Motor neuron (in vitro differentiated cells): ENCODE measurements at regions of chr1 and their contacts with region 1.

Region 1: GRCh38 chr1:153510984-153511410 is 24.8 kb downstream of the S100A6 start:
- ATAC-seq: peak; percentile 31 to 99 (median 96)
- H3K4me3 ChIP-seq: no peak overlapping the region
- H3K27ac ChIP-seq: no peak overlapping the region
- H3K4me1 ChIP-seq: no peaks in the 10 kb centered on the region

Region 2: DNA sequence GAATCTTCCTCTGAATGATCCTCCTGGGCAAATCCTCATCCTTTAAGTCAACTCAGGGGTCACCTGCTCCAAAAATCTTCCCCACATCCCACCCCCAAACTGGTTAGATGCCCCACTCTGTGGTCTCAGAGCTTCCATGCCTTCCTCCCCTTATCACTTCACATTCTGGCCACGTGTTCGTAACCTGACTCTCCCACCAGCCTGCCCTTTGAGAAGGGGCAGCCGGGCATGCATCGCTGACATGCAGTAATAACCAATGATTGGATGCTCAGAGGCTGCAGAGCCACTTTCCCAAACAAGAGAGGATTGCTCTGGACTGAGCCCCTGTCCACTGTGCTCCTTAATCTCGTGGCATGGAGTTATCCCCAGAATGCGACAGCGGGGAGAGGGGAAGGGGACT is 300.8 kb before region 1 on chr1:
- in situ Hi-C with region 1: no loop called
- ATAC-seq: no peak
- H3K4me3 ChIP-seq: no peak overlapping the region
- H3K27ac ChIP-seq: no peak overlapping the region
- H3K4me1 ChIP-seq: no peaks in the 10 kb centered on the region

Region 3: DNA sequence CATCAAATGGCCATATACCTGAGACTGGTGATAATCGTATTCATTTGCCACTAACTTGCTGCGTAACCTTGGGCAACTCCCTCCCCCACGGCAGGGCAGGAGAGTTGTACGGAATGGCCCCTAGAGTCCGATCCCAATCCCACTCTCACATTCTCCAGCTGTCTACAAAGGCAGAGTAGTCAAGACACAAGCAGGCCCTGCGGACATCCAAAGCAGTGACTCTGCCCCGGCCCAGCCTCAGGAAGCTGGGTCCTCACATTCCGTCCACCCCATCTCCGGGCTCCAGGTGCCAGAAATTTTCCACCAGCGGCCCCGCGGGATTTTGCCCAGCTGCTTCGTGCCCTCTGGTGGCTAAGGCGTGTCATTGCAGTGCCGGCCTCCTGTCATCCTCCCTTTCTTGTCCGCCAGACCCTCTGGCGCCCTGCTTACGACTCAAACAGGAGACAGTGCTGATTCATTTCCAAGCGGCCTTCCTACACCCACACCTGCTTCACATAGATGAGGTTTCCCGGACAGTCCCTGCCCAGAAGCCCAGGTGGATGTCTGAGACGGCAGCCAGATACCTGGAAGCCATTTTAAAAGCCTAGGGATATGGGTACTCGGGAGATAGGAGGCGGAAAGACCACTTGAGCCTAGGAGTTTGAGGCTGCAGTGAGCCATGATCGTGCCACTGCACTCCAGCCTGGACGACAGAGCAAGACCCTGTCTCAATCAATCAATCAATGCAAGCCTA is 57.5 kb after region 1 on chr1:
- in situ Hi-C with region 1: loop called in 1 of 9 experiments (anchors 10 kb)
- ATAC-seq: peak; percentile 11 to 48 (median 22)
- H3K4me3 ChIP-seq: no peak overlapping the region
- H3K27ac ChIP-seq: no peak overlapping the region
- H3K4me1 ChIP-seq: peaks cover 19 to 26% of the 10 kb centered on the region in 2 donors

Region 4: DNA sequence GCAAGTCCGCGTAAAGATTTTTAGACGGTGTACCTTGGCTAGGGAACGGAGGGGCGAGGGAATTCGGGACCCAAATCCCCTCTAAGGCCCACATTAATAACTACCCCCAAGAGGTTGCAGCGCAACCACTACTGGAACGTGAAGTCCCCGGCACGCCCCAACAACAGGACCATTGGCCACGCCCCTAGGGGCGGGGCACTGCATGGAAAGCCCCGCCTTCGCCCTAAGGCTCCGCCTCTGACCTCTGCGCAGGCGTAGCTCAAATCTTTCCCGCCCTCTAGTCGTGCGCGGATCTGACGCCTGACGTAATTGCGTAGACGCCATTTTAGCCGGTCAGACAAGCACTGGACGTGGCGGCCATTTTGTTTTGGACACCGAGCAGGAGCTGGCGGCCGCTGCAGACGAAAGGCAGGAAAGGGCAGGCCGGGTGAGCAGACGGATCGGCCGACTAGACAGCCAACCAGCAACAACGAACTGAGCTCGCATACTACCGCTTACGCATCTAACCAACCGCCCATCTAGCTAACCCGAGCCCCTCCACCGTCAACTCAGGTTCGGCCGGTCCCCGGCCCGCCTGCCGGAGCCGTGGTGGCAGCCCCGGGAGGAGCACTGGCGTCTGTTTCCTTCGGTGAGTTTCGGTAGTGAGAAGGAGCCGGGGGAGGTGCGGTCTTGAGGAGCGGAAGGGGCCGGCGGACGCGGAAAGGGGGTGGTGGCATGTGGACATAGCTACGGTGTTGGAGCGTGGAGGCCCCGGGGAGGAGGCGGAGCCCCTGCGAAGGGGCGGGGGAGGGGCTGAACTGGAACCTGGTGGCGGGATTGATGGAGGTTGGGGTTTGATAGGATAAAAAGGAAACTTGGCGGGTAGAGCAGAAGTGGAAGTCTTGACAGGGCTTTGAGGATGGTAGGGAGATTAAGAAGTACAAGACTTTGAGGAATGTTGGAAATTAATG is 123.0 kb after region 1 on chr1 and contains the start of gene CHTOP:
- in situ Hi-C with region 1: loop called in 3 of 9 experiments (anchors 25 kb)
- ATAC-seq: peak; percentile 89 to 96 (median 94)
- H3K4me3 ChIP-seq: peak within 1 kb of the TSS; percentile 84 to 100 (median 99)
- H3K27ac ChIP-seq: peak within 1 kb of the TSS; percentile 100
- H3K4me1 ChIP-seq: peaks cover 12 to 15% of the 10 kb centered on the region in 2 donors
- total RNA-seq, gene CHTOP: 29.9 to 136 (median 99.2) TPM

Region 5: DNA sequence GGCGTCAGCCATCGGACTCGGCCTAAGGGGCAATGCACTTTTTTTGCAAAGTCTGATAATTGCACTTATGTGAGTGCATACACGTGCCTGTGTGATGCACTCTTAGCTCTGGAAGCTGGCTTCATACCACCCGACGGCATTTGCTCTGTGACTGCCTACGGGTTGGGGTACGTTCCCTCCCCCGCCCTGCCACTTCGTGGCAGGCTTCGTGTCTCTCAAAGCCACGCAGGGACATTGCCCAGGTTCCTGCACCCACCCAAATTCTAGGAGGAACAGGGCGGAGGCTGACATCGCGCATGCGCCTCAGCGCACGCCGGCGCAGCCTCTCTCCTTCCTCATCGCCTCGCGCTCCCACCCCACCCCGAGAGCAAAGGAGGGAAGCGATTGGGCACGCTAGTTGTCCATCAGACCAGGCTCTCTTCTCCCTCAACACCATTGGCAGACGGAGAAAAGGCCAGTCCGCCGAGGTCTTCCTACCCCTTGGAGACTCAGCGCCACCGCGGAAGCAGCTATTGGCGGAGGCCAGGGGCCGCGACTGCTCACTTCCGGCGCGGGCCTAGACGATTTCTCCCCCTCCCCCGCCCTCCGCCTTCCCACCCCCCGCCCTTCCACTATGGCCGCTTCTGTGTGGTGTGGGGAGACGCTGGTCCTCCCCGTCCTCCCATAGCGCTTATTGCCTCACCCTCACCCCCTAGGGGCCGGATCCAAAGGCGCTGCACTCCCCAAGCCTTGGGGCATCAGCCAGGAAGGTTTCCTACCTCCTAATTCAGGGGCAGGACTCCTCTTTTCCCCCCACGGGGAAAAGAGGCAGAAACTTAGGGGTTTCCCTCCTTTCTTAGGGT is 216.7 kb after region 1 on chr1 and contains the start of gene INTS3:
- in situ Hi-C with region 1: loop called in 1 of 9 experiments (anchors 25 kb)
- ATAC-seq: peak; percentile 98 to 100 (median 99)
- H3K4me3 ChIP-seq: peak within 1 kb of the TSS; percentile 72 to 92 (median 83)
- H3K27ac ChIP-seq: peak within 1 kb of the TSS; percentile 95 to 96
- H3K4me1 ChIP-seq: peaks cover 25% of the 10 kb centered on the region in 2 donors
- total RNA-seq, gene INTS3: 33.0 to 70.4 (median 44.9) TPM

Region 6: GRCh38 chr1:153749408-153750005 is 238.5 kb after region 1 on chr1:
- in situ Hi-C with region 1: loop called in 2 of 9 experiments (anchors 25 kb)
- ATAC-seq: peak; percentile 85 to 100 (median 98)
- H3K4me3 ChIP-seq: no peak overlapping the region
- H3K27ac ChIP-seq: no peak overlapping the region
- H3K4me1 ChIP-seq: no peaks in the 10 kb centered on the region

Region 7: DNA sequence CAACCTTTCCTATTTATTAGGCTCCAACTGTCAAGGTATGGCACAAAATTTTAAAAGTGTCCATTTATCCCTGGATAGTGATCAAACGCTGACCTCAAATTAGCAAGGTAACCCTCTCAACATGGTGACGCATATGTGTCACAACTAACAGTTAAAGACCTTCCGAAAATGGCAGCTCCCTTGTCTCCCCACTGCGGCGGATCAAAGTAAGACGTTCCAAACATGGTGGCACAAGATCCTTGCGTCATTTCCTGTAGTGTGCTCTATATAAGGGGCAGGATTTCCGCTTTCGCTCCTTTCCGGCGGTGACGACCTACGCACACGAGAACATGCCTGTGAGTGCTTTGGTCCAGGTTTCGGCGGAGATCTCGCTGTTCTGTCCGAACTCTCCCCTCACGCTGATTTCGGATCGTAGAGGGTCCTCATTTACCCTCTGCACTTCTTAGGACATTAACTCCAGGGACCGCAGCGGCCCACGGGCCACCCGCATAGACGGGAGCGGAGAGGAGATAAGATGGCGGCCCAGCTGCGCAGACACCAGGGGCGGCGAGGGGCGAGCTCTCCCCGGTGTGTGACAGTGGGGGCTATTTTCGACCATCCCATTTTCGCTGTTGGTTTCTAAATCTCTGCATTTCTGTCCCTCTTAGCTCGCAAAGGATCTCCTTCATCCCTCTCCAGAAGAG is 479.6 kb after region 1 on chr1 and contains the start of gene RPS27:
- in situ Hi-C with region 1: loop called in 5 of 9 experiments (anchors 25 kb)
- ATAC-seq: peak; percentile 55 to 86 (median 78)
- H3K4me3 ChIP-seq: peak within 1 kb of the TSS; percentile 72 to 98 (median 95)
- H3K27ac ChIP-seq: peak within 1 kb of the TSS; percentile 90 to 94
- H3K4me1 ChIP-seq: peaks cover 21 to 27% of the 10 kb centered on the region in 2 donors
- total RNA-seq, gene RPS27: 2,543 to 20,464 (median 10,879) TPM